MCF 10A (cell line): ENCODE measurements at regions of chr12 and their contacts with region 1.

Region 1: GRCh38 chr12:54207484-54208294 is 18.9 kb upstream of the SMUG1 start:
- DNase-seq: peak; percentile 80
- H3K4me3 Mint-ChIP-seq: no peak overlapping the region
- H3K27ac Mint-ChIP-seq: no peak overlapping the region
- H3K4me1 Mint-ChIP-seq: peaks cover 6% of the 10 kb centered on the region
- H3K27me3 Mint-ChIP-seq: peaks cover 11% of the 10 kb centered on the region
- CTCF ChIP-seq: peak; percentile 90

Region 2: GRCh38 chr12:53867216-53868001 is 340.3 kb before region 1 on chr12:
- CTCF ChIA-PET with region 1: no interaction called
- POLR2A ChIA-PET with region 1: no interaction called
- intact Hi-C with region 1: no loop called
- DNase-seq: peak; percentile 84
- H3K4me3 Mint-ChIP-seq: no peak overlapping the region
- H3K27ac Mint-ChIP-seq: peak overlapping the region; percentile 25
- H3K4me1 Mint-ChIP-seq: peaks cover 32% of the 10 kb centered on the region
- H3K27me3 Mint-ChIP-seq: no peaks in the 10 kb centered on the region
- CTCF ChIP-seq: no peak

Region 3: DNA sequence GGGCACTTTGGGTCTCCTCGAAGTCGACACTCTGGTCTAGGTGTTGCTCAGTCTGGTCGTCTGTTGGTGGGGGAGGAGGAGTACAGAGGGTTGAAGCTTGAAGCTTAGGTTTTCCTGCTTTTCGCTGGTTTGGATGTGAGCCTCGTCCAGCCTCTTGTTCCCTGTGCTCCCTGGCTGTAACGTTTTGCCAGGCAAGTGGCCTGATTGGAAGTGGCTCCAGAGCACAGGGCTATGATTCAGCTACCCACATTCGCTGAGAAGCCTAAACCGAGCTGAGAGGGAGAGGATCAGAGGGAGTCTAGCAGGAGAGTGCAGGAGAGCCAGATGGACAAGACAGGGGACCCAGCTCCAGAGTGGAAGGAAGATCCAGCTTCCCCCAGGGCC is 216.6 kb before region 1 on chr12:
- CTCF ChIA-PET with region 1: interaction called, 10 read pairs
- POLR2A ChIA-PET with region 1: no interaction called
- intact Hi-C with region 1: no loop called
- DNase-seq: no peak
- H3K4me3 Mint-ChIP-seq: no peak overlapping the region
- H3K27ac Mint-ChIP-seq: no peak overlapping the region
- H3K4me1 Mint-ChIP-seq: peaks cover 24% of the 10 kb centered on the region
- H3K27me3 Mint-ChIP-seq: peaks cover 7% of the 10 kb centered on the region
- CTCF ChIP-seq: no peak

Region 4: DNA sequence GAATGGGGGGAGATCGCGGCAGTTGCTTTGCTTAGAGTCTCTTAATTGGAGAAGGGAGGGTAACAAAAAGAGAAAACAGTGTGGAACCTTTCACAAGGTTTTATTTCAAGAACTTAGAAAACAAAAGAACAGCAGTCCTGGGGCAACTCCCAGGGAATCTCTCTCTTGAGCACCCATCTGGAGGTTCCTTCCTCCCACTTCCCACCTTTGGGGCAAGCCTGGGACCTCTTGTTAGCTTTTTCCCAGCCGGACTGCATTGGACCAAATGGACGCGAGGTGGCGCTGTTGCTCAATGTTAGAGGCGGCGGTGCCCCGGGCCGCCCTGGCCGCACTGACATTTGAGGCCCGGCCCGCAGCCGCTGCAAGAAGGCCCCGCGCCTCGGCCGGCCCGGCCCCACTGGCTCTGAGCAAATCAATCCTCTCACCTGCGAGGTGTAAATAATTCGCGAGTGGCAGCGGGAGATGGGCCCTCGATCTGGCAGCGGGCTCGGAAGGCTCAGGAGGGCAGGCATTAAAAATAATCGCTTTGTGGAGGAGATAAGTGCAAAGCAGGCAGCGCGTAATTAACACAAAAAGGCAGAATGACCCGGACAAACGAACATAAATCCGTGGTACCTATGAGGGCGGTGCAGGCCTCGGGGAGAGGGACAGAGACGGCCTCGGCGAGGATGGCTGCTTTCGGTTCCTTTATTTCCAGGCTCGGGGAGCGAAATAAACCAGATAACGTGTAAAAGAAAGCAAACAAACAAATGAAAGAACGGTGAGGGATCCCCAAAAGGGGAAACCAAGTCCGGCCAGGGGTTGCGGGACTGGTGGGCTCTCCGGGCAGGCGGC is 201.6 kb before region 1 on chr12:
- CTCF ChIA-PET with region 1: interaction called, 200 read pairs
- POLR2A ChIA-PET with region 1: interaction called, 11 read pairs
- intact Hi-C with region 1: loop called (anchors 1 kb)
- DNase-seq: peak; percentile 88
- H3K4me3 Mint-ChIP-seq: no peak overlapping the region
- H3K27ac Mint-ChIP-seq: no peak overlapping the region
- H3K4me1 Mint-ChIP-seq: peaks cover 25% of the 10 kb centered on the region
- H3K27me3 Mint-ChIP-seq: no peaks in the 10 kb centered on the region
- CTCF ChIP-seq: peak; percentile 96

Region 5: DNA sequence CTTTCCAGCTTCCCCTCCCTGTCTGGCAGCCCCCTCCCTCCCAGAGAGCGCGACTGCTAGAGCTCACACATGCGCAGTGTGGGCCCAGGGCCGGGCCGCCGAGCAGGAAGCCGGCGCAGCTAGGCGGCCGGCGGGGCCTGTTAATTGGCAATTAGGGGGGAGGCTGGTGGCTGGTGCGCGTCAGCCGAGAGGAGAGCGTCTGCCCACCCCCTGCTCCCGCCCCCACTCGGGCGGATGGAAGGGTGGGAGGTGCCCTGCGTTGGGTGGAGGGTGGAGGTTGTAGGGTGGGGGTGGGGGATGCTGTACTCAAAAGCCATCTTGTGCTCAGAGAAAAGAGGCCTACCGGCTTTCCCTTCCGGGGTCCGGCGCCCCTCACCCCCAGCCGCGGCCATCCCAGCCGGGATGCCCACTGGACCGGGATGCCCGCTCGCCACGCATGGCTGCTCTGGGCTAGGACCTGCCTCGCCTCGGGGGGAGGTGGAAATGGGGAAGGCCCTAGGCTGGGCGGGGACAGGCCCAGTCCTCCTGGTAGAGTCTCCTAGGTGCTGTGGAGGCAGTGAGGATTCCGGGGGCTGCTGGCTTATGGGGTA is 189.7 kb before region 1 on chr12:
- CTCF ChIA-PET with region 1: interaction called, 38 read pairs
- POLR2A ChIA-PET with region 1: interaction called, 8 read pairs
- intact Hi-C with region 1: no loop called
- DNase-seq: peak; percentile 96
- H3K4me3 Mint-ChIP-seq: peak overlapping the region; percentile 98
- H3K27ac Mint-ChIP-seq: peak overlapping the region; percentile 98
- H3K4me1 Mint-ChIP-seq: peaks cover 23% of the 10 kb centered on the region
- H3K27me3 Mint-ChIP-seq: no peaks in the 10 kb centered on the region
- CTCF ChIP-seq: no peak

Region 6: GRCh38 chr12:54147186-54147585 is 60.5 kb before region 1 on chr12:
- CTCF ChIA-PET with region 1: no interaction called
- POLR2A ChIA-PET with region 1: no interaction called
- intact Hi-C with region 1: no loop called
- DNase-seq: no peak
- H3K4me3 Mint-ChIP-seq: no peak overlapping the region
- H3K27ac Mint-ChIP-seq: no peak overlapping the region
- H3K4me1 Mint-ChIP-seq: no peaks in the 10 kb centered on the region
- H3K27me3 Mint-ChIP-seq: no peaks in the 10 kb centered on the region
- CTCF ChIP-seq: no peak

Region 7: DNA sequence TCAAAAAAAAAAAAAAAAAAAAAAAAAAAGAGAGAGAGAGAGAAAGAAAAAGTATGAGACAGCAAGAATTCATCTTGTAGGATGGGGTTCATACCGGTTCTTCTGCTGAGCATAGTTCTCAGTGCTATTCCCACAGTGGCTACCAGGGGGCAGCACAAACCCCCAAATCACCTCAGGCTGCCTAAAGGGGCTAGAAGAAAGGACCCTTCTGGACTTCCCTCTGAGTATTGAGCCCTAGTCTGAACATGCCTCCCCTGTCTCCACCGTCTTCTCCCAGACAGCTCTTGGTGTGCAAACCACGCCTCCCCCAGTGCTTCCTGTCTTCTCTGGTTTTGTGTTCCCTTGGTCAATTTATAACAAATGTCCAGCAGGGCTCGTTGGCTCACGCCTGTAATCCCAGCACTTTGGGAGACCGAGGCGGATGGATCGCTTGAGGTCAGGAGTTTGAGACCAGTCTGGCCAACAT is 12.4 kb after region 1 on chr12:
- CTCF ChIA-PET with region 1: interaction called, 42 read pairs
- POLR2A ChIA-PET with region 1: no interaction called
- intact Hi-C with region 1: no loop called
- DNase-seq: peak; percentile 75
- H3K4me3 Mint-ChIP-seq: no peak overlapping the region
- H3K27ac Mint-ChIP-seq: no peak overlapping the region
- H3K4me1 Mint-ChIP-seq: peaks cover 18% of the 10 kb centered on the region
- H3K27me3 Mint-ChIP-seq: no peaks in the 10 kb centered on the region
- CTCF ChIP-seq: peak; percentile 78